ENCODE measurements at regions of chr3 and their contacts with region 1.

Region 1: DNA sequence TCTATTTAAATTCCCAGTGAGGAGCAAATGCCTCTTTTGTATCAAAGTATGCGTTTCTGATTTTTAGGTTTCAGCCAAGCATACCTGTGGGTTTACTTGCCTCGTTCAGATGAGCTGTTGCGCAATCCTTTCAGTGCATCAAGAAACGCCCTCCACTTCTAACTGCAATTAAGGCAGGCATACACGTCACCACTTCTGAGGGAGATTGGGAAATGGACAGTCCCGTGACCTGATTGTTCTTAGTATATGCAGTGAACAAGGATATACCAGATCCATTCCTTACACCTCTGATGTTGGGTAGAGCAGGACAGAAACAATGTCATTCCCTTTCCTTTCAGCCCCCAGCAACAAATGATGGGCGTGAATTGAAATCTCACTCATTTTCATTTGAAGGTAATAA is 219.0 kb downstream of the ITPR1 start:
- DNase-seq: peak; percentile 57
- ATAC-seq: no peak
- H3K4me3 ChIP-seq: no peak overlapping the region
- H3K27ac ChIP-seq: no peak overlapping the region
- H3K4me1 ChIP-seq: peaks cover 5% of the 10 kb centered on the region; the same call in 1 of the 2 replicates
- H3K27me3 ChIP-seq: no peaks in the 10 kb centered on the region
- CTCF ChIP-seq: no peak
- POLR2A ChIP-seq: no peak
- RAD21 ChIP-seq: no peak

Region 2: GRCh38 chr3:4680881-4681300 is 31.3 kb before region 1 on chr3:
- CTCF ChIA-PET with region 1: interaction called, 11 read pairs
- POLR2A ChIA-PET with region 1: no interaction called
- dilution Hi-C with region 1: no loop called
- in situ Hi-C with region 1: no loop called
- intact Hi-C with region 1: no loop called
- DNase-seq: peak; percentile 29
- ATAC-seq: peak; percentile 80
- H3K4me3 ChIP-seq: no peak overlapping the region
- H3K27ac ChIP-seq: no peak overlapping the region
- H3K4me1 ChIP-seq: peaks cover 3% of the 10 kb centered on the region
- H3K27me3 ChIP-seq: no peaks in the 10 kb centered on the region
- CTCF ChIP-seq: no peak
- POLR2A ChIP-seq: no peak
- RAD21 ChIP-seq: no peak

Region 3: DNA sequence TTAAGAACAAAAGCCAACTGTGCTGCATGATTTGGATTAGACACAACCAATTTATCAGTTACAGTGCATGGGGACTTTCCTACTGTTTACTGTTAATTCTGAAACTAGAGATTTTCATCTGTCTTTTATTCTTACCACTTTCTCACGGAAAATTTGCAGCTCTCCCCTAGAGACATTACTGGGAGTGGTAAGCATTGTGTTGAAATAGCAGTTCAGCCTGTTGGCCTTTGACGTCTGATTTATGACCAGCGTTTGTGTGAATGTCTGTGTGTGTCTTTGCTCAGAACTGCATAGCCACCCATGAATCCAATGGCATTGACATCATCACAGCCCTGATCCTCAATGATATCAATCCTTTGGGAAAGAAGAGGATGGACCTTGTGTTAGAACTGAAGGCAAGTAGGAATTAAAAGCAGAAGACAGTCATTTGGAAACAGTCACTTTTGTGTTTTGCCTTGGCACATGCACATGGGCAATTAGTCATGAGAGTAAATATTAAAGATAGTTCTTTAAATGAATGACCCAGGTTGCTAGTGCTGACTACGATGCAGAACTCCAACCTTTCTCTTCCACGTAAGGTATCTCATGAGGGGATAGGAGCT is 64.9 kb after region 1 on chr3:
- CTCF ChIA-PET with region 1: no interaction called
- POLR2A ChIA-PET with region 1: no interaction called
- dilution Hi-C with region 1: no loop called
- in situ Hi-C with region 1: no loop called
- intact Hi-C with region 1: no loop called
- DNase-seq: no peak
- ATAC-seq: no peak
- H3K4me3 ChIP-seq: no peak overlapping the region
- H3K27ac ChIP-seq: no peak overlapping the region
- H3K4me1 ChIP-seq: peaks cover 4% of the 10 kb centered on the region; the same call in 1 of the 2 replicates
- H3K27me3 ChIP-seq: no peaks in the 10 kb centered on the region
- CTCF ChIP-seq: no peak
- POLR2A ChIP-seq: no peak
- RAD21 ChIP-seq: no peak

Region 4: DNA sequence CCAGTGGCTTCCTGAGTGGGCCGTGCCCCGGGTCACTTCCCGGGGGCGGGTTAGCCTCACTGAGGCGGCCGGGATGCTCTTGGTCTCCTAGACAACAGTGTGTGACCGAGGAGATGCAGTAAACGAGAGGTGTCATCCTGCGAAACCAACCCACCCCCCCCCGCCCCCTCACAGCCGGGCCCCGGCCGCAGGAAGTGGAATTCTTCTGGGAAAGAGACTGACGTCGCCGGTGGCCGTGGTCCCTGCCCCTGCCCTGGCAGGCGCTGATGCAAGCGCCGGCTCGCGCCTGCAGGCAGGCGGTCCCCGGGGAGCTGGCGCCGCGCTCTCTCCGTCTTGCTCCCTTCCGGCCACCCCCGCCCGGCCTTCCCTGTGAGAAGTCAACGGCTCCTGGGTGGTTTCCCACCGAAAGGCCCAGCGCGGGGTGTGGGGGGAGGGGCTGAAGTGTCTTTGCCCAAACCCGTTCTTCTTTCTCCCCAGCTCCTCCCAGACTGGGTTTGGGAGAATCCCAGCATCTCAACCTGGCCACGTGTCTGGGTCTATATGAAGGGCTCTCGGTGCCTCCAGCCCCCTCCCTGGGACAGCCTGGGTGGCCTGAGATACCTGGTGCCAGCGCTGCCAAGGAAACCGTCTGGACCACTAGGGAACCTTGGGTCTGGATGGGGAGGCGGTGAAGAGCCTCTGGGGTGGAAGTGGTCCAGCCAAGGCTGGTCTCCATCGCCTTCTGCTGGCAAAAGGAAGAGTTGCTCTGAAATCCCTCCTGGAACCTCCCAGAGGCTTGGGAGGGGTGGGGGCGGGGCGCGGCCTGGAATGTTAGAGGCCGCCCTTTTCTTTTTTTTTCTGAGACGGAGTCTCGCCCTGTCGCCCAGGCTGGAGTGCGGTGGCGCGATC is 314.4 kb after region 1 on chr3:
- CTCF ChIA-PET with region 1: interaction called, 10 read pairs
- POLR2A ChIA-PET with region 1: no interaction called
- dilution Hi-C with region 1: no loop called
- in situ Hi-C with region 1: loop called (anchors 10 kb)
- intact Hi-C with region 1: loop called (anchors 1 kb)
- DNase-seq: peak; percentile 95
- ATAC-seq: peak; percentile 86
- H3K4me3 ChIP-seq: peak overlapping the region; percentile 46
- H3K27ac ChIP-seq: peak overlapping the region; percentile 90
- H3K4me1 ChIP-seq: peaks cover 7% of the 10 kb centered on the region
- H3K27me3 ChIP-seq: no peaks in the 10 kb centered on the region
- CTCF ChIP-seq: peak; percentile 93
- POLR2A ChIP-seq: peak; percentile 79
- RAD21 ChIP-seq: peak; percentile 95

Region 5: GRCh38 chr3:5122030-5122740 is 410.0 kb after region 1 on chr3 and contains the start of gene ARL8B:
- CTCF ChIA-PET with region 1: no interaction called
- POLR2A ChIA-PET with region 1: no interaction called
- dilution Hi-C with region 1: no loop called
- in situ Hi-C with region 1: no loop called
- intact Hi-C with region 1: loop called (anchors 2 kb)
- DNase-seq: peak; percentile 83
- ATAC-seq: peak; percentile 100
- H3K4me3 ChIP-seq: peak within 1 kb of the TSS; percentile 92
- H3K27ac ChIP-seq: peak within 1 kb of the TSS; percentile 86
- H3K4me1 ChIP-seq: peaks cover 2% of the 10 kb centered on the region; the same call in 1 of the 2 replicates
- H3K27me3 ChIP-seq: no peaks in the 10 kb centered on the region
- CTCF ChIP-seq: peak; percentile 99
- POLR2A ChIP-seq: peak; percentile 91
- RAD21 ChIP-seq: peak; percentile 62
- total RNA-seq, gene ARL8B: 47.0 and 62.5 TPM in 2 replicates

Measured in IMR-90 (cell line).